ENCODE measurements at regions of chr7 and their contacts with region 1.

Region 1: DNA sequence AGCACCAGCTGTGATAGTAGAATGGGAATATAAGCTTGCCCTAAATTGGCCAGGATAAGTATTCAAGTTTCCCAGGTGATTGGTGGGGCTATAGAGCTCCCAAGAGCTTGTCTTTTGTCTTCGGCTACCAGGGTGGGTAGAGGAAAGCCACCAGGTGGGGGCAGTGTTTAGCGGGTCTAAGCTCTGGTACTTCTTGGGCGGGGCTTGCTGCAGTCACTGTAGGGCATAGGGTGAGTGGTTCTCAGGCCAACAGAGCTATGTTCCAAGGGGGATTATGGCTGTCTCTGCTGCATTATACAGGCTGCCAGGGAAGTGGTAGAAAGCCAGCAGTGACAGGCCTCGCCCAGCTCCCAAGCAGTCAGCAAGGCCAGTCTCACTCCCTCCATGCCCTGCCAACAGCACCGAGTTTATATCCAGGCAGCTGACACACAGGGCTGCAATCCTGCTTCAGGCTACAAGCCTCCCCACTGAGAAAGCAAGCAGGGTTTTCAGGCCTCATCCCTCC is 110.7 kb downstream of the ZNF467 start:
- DNase-seq: peak; percentile 71 to 90
- ATAC-seq: peak; percentile 96 to 99 (median 98)
- H3K4me3 ChIP-seq: no peak overlapping the region
- H3K27ac ChIP-seq: peak overlapping the region; percentile 39
- H3K4me1 ChIP-seq: peaks cover 9% of the 10 kb centered on the region
- H3K27me3 ChIP-seq: no peaks in the 10 kb centered on the region
- CTCF ChIP-seq: peak; percentile 66

Region 2: GRCh38 chr7:149586646-149587332 is 75.9 kb before region 1 on chr7:
- intact Hi-C with region 1: no loop called
- DNase-seq: no peak
- ATAC-seq: no peak
- H3K4me3 ChIP-seq: no peak overlapping the region
- H3K27ac ChIP-seq: no peak overlapping the region
- H3K4me1 ChIP-seq: no peaks in the 10 kb centered on the region
- H3K27me3 ChIP-seq: no peaks in the 10 kb centered on the region
- CTCF ChIP-seq: no peak

Region 3: DNA sequence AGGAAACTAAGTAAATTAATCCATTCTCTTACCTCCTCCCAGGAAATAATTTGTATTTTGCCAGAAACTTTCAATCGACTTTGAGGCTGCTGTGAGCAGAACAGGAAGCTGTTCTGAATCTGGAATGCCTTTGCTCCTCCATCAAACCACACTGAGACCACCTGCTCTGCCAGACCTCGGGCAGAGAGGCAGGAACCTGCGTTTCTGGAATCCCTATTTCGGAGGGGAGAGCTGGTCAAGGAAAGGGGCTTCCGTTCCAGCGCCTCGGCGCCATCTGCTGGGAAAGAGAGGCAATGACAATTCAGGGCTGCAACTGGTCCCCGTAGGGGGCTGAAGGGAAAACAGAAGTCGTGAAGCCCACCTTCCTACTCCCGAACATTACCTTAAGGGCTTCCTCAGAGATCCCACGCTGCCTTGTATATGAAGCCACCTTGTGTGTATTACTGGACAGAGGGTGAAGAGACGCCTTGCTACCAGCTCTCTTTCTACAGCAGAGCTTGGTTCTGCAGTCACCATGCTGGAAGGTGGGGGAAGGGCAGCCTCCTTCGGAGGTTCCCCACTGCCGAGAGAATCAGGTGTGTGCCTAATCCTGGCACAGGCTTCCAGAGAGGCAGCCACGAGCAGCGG is 79.5 kb after region 1 on chr7:
- intact Hi-C with region 1: loop called (anchors 2 to 5 kb)
- DNase-seq: peak; percentile 65 to 80
- ATAC-seq: peak; percentile 84 to 97 (median 88)
- H3K4me3 ChIP-seq: peak overlapping the region; percentile 67
- H3K27ac ChIP-seq: peak overlapping the region; percentile 61
- H3K4me1 ChIP-seq: peaks cover 12% of the 10 kb centered on the region
- H3K27me3 ChIP-seq: no peaks in the 10 kb centered on the region
- CTCF ChIP-seq: peak; percentile 94